HEK293 (cell line): ENCODE measurements at regions of chr20 and their contacts with region 1.

Region 1: DNA sequence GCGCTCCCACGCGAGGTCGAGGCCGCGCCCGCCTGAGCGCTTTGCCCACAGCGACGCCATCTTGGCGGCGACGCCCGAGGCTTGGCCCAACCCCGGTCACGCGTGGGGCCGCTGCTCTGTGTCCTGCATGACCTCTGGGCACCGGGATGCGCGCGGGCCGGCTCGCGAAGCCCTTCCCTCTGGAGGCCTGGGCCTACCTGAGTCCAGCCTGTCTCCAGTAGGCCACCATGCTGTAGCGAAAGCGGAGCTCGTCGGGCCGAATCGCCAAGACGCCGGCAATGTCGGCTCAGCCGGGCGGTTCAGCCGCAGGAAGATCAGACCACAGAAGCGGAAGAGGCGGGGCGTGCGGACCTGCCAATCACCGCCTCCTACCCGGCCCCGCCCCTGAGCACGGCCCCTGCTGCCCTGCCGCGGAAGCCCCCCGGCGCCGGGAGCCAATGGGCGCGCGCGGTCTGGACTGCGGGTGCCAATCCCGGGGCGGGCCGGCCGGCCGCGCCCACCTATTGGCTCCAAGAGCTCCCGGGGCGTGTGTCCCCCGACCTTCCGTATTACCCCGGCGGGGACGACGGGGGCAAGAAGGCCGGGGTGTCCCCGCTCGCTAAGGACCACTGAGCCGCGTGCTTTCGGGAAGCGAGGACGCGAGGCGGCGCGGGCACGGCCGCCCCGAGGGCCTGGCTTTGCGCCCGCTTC is at the start of gene ATP5F1E:
- H3K4me3 ChIP-seq: peak within 1 kb of the TSS; percentile 95
- H3K27ac ChIP-seq: peak within 1 kb of the TSS; percentile 91
- H3K4me1 ChIP-seq: peaks cover 7% of the 10 kb centered on the region; the same call in 1 of the 2 replicates
- CTCF ChIP-seq: no peak; the same call in 1 of the 2 replicates

Region 2: DNA sequence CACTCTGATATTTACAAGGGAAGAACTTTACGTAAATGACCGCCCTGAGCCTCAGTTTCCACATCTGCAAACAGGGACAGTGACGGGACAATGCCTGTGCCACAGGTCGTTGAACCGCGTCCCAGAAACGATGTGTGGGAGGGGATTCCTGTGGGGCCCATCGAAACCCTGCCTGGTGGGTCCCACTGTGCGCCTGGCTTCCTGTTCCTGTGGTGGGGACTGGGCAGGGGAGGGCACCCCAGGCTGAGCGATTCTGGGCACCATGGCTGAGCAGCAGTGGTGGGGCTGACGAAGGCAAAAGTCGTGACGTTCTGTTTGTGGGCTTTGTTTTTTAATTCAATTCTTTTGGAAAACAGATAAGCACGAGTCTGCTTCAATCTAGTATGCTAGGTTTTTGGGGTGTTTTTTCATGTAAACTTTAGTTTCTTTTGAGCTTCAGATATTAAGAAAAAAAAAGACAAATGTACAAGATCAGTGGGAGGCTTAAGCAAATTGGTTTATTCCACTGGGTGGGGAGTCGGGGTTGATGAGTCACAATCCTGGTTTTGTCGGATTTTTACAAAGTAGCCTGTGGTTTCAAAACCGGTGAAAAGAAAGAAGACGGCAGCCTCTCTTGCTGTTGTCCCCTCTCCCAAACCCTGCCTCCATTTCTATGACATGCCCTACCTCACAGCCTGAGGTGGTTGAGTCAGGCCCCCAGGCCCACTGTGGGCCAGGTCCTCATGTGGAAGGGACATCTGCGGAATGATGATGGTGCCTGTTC is 221.9 kb before region 1 on chr20:
- CTCF ChIA-PET with region 1: no interaction called
- POLR2A ChIA-PET with region 1: no interaction called
- H3K4me3 ChIP-seq: no peak overlapping the region
- H3K27ac ChIP-seq: no peak overlapping the region
- H3K4me1 ChIP-seq: no peaks in the 10 kb centered on the region
- CTCF ChIP-seq: no peak

Region 3: DNA sequence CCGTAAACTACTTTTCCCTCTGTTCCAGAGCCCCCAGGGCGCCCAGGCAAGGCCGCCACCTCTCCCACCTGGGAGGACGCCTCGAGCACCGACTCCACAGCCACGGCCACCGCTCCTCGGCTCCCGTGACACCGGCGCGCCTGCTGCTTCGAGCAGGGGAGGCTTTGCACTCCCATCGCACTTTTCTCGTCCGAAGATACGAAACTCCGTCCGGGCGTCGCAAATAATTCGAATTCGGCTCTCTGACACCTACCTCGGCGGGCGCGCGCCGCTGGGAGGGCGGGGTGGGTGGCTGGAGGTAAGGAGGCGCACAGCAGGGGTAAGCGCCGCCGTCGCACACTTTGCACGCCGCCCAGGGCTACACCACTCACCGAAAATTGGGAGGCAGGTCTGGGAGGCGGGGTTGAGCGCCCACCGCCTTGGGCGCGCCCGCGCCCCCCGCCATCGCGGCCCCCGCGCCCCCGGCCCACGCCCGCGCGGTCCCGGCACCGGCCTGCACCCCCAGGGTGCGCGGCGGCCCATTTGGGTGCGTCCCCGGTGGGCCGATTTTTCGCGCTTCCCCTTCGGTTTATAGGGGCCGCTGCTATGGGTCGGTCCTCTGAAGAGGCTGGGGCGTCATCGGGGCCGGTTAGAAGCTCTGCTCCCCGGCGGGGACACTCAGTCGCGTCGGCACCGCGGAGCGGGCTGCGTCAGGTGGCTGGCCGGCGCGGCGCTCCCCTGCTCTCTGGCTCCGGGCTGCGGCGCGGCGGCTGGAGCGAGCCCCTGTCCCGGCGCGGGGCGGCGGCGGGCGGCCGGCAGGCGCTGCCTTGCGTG is 143.4 kb before region 1 on chr20:
- CTCF ChIA-PET with region 1: no interaction called
- POLR2A ChIA-PET with region 1: interaction called, 12 read pairs
- H3K4me3 ChIP-seq: peak overlapping the region; percentile 86
- H3K27ac ChIP-seq: peak overlapping the region; percentile 97
- H3K4me1 ChIP-seq: peaks cover 4% of the 10 kb centered on the region
- CTCF ChIP-seq: no peak

Region 4: DNA sequence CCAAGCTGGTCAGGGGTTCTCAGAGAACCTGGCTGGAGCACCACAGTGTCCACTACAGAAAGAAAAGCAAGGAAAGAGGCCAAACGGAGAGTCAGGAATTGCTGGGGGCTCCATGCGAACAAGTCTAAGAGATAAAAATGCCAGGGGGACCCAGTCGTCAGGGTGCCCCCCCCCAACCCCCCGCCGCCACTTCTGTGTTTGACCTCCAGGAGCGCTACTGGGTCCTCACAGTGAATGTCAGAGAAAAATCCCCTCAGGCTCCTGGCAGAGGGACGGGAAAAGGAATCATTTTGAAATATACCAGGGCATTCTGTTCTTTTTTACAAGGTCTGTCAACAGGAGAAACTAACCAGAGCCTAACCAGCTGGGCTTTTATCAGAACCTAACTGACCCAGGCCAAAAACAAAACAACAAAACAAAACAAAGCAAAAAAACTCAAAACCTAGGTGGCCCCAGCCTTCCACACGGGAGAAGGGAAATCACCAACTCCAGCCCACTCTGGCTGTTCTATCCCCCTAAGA is 69.0 kb before region 1 on chr20:
- CTCF ChIA-PET with region 1: no interaction called
- POLR2A ChIA-PET with region 1: no interaction called
- H3K4me3 ChIP-seq: no peak overlapping the region
- H3K27ac ChIP-seq: no peak overlapping the region
- H3K4me1 ChIP-seq: no peaks in the 10 kb centered on the region
- CTCF ChIP-seq: no peak

Region 5: DNA sequence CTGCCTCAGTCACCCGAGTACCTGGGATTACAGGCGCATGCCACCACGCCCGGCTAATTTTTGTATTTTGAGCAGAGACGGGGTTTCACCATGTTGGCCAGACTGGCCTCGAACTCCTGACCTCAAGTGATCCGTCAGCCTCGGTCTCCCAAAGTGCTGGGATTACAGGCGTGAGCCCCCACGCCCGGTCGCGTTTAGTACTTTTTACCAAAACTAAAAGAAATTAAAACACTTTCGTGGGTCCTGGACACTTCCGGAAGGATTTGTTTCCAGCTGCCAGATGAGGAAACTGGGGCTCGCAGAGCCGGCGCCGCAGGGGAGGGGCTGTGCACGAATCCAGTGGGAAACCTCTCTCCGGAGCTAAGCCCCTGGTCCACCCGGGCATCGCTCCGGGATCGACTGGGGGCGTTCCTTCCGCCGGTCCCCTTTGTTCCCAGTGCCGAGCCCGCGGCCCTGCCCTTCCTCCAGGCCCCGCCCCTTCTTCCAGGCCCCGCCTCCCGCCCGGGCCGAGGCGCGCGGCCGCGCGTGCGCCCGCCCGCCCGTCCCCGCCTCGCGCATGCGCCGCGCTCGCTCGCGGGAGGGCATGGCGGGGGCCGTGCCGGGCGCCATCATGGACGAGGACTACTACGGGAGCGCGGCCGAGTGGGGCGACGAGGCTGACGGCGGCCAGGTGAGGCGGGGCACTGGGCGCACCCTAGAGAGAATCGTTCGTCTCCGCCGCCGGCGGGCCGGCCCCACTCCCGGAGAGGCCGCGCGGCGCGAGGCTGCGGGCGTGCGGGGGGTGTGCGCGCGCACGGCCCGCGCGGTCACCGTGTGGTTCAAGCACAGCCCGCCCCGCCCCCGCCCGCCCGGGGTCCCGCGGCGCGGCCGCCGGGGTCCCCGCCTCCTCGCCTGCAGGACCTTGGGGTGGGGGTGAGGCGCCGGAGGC is 51.2 kb before region 1 on chr20 and contains the start of gene NELFCD:
- CTCF ChIA-PET with region 1: no interaction called
- POLR2A ChIA-PET with region 1: interaction called, 14 read pairs
- H3K4me3 ChIP-seq: peak within 1 kb of the TSS; percentile 84
- H3K27ac ChIP-seq: peak within 1 kb of the TSS; percentile 77
- H3K4me1 ChIP-seq: no peaks in the 10 kb centered on the region
- CTCF ChIP-seq: no peak

Region 6: GRCh38 chr20:59000357-59000756 is 31.8 kb before region 1 on chr20:
- CTCF ChIA-PET with region 1: no interaction called
- POLR2A ChIA-PET with region 1: no interaction called
- H3K4me3 ChIP-seq: no peak overlapping the region
- H3K27ac ChIP-seq: no peak overlapping the region
- H3K4me1 ChIP-seq: peaks cover 2% of the 10 kb centered on the region; the same call in 1 of the 2 replicates
- CTCF ChIP-seq: no peak

Region 7: GRCh38 chr20:59016795-59017492 is 15.2 kb before region 1 on chr20:
- CTCF ChIA-PET with region 1: interaction called, 3 read pairs
- POLR2A ChIA-PET with region 1: interaction called, 19 read pairs
- H3K4me3 ChIP-seq: no peak overlapping the region
- H3K27ac ChIP-seq: no peak overlapping the region
- H3K4me1 ChIP-seq: no peaks in the 10 kb centered on the region
- CTCF ChIP-seq: no peak

Region 8: DNA sequence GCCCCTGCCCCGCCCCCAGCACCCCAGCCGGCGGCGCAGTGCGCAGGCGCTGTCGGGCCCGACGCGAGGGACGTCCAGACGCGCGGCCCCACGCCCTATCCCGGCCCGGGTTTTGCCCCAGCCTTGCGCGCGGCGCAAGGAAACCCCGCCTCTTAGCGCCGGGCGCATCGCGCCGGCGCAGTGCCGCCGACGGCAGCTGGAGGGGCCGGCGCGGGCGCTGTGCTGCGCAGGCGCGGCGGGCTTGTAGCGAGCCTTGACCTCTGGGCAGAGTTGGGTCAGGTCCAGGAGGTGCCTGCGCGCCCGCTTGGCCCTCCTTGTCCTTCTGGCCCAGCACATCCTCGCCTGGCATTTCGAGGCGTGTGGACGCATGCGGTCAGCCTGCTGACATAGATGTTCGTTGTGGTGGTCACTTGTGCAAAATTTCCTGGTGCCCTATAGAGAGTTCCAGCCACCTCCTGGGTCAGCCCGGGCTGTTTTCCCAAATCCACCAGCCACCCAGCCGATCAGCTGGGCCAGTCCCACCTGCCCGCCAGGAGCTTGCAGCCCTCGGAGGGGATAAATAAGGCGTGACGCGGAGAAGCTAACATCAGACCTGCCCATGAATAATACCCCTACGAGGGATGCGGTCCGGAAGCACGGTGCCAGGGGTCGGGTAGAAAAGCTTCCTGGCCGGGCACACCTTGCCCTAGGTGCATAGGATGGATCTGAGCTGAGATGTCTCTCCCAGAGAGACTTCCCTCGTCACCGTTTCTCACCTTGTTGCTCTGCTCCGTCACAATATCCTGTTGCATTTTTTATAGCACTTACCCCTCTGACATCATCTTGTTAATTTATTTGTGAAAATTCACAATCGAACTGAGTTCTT is 10.9 kb after region 1 on chr20:
- CTCF ChIA-PET with region 1: no interaction called
- POLR2A ChIA-PET with region 1: interaction called, 28 read pairs
- H3K4me3 ChIP-seq: peak overlapping the region; percentile 90
- H3K27ac ChIP-seq: peak overlapping the region; percentile 10; the same call in 1 of the 2 replicates
- H3K4me1 ChIP-seq: peaks cover 2% of the 10 kb centered on the region; the same call in 1 of the 2 replicates
- CTCF ChIP-seq: no peak

Region 9: GRCh38 chr20:59050429-59050828 is 18.3 kb after region 1 on chr20:
- CTCF ChIA-PET with region 1: no interaction called
- POLR2A ChIA-PET with region 1: interaction called, 10 read pairs
- H3K4me3 ChIP-seq: no peak overlapping the region
- H3K27ac ChIP-seq: no peak overlapping the region
- H3K4me1 ChIP-seq: no peaks in the 10 kb centered on the region
- CTCF ChIP-seq: no peak

Region 10: GRCh38 chr20:59063358-59064213 is 31.4 kb after region 1 on chr20:
- CTCF ChIA-PET with region 1: no interaction called
- POLR2A ChIA-PET with region 1: interaction called, 16 read pairs
- H3K4me3 ChIP-seq: no peak overlapping the region; the same call in 1 of the 2 replicates
- H3K27ac ChIP-seq: peak overlapping the region; percentile 52
- H3K4me1 ChIP-seq: peaks cover 11% of the 10 kb centered on the region; the same call in 1 of the 2 replicates
- CTCF ChIP-seq: no peak

Region 11: DNA sequence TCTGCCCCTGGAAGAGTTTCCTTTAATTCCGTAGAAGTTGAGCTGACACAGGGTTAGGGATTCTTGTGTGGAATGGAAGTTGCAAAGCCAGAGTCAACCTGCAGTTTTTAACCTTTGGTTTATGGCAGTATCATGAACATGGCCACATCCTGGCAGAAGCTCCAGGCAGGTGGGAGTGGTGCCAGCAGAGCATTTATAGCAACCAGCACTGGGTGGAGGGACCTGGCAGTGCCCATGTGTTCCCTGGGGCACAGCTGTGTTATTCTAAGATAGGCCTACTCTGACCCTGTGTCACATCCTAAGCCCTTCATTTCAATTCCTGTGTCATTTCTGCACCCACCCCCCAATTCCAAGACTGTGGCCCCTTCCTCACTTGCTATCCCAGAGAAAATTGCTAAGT is 105.4 kb after region 1 on chr20:
- CTCF ChIA-PET with region 1: no interaction called
- POLR2A ChIA-PET with region 1: no interaction called
- H3K4me3 ChIP-seq: no peak overlapping the region
- H3K27ac ChIP-seq: no peak overlapping the region
- H3K4me1 ChIP-seq: no peaks in the 10 kb centered on the region
- CTCF ChIP-seq: no peak